Ascending aorta (tissue), 2 donors: ENCODE measurements at regions of chr4 and their contacts with region 1.

Region 1: DNA sequence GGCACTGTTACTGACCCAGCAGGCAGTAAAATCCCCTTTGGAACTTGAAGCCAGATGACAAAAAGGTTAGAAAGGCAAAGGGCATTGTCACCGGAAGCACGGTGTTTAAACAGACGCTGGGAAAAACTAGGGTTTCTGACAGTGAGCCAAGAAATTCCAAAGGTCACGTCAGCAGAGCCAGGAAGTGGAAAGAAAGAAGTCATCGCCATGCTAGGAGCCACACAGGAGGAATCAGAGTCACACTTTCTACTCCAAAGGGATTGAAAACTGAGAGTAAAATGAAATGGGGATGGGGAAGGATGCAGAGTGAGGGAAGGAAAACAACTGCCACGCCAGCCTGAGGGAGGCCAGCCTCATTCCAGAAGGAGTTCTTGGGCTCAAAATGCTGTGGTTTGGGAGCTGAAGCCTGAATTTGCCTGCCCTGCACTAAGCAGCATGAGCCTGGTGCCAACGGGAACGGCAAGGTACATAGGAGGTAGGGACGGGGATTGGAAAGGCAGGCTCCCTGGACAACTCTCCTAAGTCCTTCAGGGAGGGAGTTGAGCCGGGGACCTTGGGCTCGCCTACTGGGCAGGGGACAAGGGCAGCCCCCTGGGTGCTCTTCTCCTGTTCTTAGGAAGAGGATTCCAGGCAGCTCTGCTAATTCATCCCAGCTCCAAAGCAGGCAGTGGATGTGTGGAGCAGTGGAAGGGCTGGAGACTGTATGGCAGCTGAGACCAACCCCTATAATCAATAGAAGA is 66.8 kb downstream of the SOWAHB start:
- DNase-seq: peak in 1 of 2 donors; percentile 78
- H3K4me3 ChIP-seq: peak overlapping the region in 1 of 2 donors; percentile 8
- H3K27ac ChIP-seq: peak overlapping the region; percentile 73 to 84
- H3K4me1 ChIP-seq: peaks cover 3 to 21% of the 10 kb centered on the region in 2 donors
- H3K27me3 ChIP-seq: no peaks in the 10 kb centered on the region
- CTCF ChIP-seq: no peak

Region 2: DNA sequence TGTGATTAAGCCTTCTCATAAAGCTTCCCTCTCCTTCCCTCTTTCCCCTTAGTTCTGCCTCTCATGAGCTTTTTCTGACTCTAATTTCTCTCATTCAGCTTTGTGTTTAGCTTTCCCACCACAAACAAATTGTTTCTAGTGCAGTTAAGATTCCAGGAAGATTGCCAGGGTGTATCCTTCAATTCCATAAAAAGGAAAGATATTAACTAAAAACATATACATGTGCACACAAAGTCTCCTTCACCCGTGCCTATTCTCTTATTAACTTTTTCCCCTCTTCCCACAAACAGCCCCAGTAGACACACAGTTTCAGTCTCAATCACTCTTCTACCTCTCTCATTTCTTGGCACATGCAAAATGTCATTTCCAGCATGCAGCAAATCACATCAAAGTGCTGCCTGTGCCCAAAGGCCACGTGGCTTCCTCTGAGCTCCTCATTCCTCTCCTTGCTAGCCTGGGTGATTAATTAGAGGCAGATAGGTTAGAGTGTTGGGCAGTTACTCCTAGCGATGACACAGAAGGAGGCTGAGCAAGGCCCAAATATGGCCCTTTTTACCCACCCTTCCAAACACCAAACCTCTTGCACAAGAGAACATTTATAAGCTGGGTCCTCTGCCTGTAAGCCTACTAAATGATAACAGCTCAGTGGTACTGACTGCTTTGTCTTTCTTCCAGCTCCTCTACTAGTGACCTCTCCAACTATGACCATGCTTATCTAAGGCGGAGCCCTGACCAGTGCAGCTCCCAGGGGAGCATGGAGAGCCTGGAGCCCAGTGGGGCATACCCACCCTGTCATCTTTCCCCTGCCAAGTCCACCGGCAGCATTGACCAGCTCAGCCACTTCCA is 92.8 kb before region 1 on chr4:
- intact Hi-C with region 1: no loop called
- DNase-seq: peak; percentile 27 to 92
- H3K4me3 ChIP-seq: peak overlapping the region in 1 of 2 donors; percentile 34
- H3K27ac ChIP-seq: peak overlapping the region; percentile 92 to 97
- H3K4me1 ChIP-seq: peaks cover 21 to 44% of the 10 kb centered on the region in 2 donors
- H3K27me3 ChIP-seq: no peaks in the 10 kb centered on the region
- CTCF ChIP-seq: no peak

Region 3: GRCh38 chr4:76803522-76803921 is 27.6 kb before region 1 on chr4:
- intact Hi-C with region 1: no loop called
- DNase-seq: no peak
- H3K4me3 ChIP-seq: no peak overlapping the region
- H3K27ac ChIP-seq: no peak overlapping the region
- H3K4me1 ChIP-seq: no peaks in the 10 kb centered on the region
- H3K27me3 ChIP-seq: no peaks in the 10 kb centered on the region
- CTCF ChIP-seq: no peak

Region 4: GRCh38 chr4:76854858-76855257 is 23.7 kb after region 1 on chr4:
- intact Hi-C with region 1: loop called (anchors 2 kb)
- DNase-seq: no peak
- H3K4me3 ChIP-seq: no peak overlapping the region
- H3K27ac ChIP-seq: peak overlapping the region; percentile 14 to 54
- H3K4me1 ChIP-seq: peaks cover 2 to 19% of the 10 kb centered on the region in 2 donors
- H3K27me3 ChIP-seq: no peaks in the 10 kb centered on the region
- CTCF ChIP-seq: no peak

Region 5: GRCh38 chr4:76896731-76897535 is 65.8 kb after region 1 on chr4:
- intact Hi-C with region 1: loop called (anchors 5 kb)
- DNase-seq: peak in 1 of 2 donors; percentile 65
- H3K4me3 ChIP-seq: peak overlapping the region; percentile 61 to 66
- H3K27ac ChIP-seq: no peak overlapping the region
- H3K4me1 ChIP-seq: peaks cover 4 to 6% of the 10 kb centered on the region in 2 donors
- H3K27me3 ChIP-seq: no peaks in the 10 kb centered on the region
- CTCF ChIP-seq: no peak

Region 6: DNA sequence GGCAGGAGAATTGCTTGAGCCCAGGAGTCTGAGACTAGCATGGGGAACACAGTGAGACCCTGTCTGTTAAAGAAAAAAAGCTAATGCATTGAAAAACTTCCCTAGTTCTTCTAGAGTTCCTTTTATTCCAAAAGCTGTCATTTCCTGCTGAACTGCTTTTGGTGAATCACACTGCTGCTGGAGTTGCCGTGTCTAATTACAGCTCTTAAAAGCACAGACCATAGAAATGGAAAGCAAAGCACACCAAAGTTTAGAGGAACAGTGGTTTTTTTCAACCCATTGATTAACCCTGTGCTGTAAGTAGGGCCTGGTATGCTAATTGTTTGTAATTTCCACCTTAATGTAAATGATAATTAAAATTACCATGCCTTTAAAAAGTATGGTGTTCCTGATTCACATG is 170.8 kb after region 1 on chr4:
- intact Hi-C with region 1: loop called (anchors 5 kb)
- DNase-seq: no peak
- H3K4me3 ChIP-seq: no peak overlapping the region
- H3K27ac ChIP-seq: peak overlapping the region; percentile 39 to 58
- H3K4me1 ChIP-seq: peaks cover 9 to 25% of the 10 kb centered on the region in 2 donors
- H3K27me3 ChIP-seq: no peaks in the 10 kb centered on the region
- CTCF ChIP-seq: no peak